Thyroid gland (tissue), 4 donors: ENCODE measurements at regions of chr10 and their contacts with region 1.

Region 1: GRCh38 chr10:509361-510102 is 179.9 kb downstream of the DIP2C start:
- DNase-seq: no peak
- H3K4me3 ChIP-seq: no peak overlapping the region
- H3K27ac ChIP-seq: no peak overlapping the region
- H3K4me1 ChIP-seq: peaks cover 7 to 9% of the 10 kb centered on the region in 2 donors
- H3K27me3 ChIP-seq: no peaks in the 10 kb centered on the region
- CTCF ChIP-seq: no peak
- POLR2A ChIP-seq: no peak

Region 2: DNA sequence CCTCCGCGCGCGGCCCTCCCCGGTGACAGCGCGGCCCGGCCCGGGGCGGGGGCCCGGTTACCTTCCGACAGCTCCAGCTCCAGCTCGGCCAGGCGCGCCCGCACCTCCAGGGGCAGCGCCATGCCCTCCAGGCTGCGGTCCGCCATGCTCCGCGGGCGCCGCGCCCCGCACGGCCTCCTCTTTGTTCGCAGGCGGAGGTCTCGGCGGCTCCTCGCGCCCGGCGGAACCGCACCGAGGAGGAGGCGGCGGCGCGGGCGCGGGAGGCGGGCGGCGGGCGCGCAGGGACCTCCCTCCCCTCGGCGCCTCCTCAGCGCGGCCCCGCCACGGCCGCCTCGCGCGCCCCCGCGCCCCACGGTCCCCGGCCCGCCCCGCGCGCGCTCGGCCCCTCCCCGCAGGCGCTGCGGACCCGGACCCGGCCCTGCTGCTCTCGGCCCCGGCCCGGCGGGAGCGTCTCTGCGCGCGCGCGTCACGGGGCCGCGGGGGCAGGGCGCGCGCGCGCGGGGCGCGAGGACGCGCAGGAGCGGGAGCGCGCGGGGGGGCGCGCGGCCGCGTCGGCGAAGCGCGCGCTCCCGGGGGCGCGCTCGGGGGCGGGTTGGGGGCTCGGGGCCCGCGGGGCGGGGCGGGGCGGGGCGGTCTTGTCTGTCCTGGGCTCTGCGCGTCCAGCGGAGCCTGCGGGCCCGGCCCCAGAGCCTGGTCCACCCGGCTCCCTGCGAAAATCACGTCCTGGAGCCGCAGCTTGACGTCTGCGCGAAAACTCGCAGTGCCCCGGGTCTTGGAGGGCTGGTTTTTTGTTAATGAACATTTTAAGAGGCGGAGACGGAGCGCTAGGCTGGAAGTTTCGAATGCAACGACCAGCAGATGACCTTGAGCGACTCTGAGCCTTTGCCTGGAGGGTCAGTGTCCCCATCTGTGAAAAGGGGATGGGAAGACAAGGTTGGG is 180.2 kb after region 1 on chr10 and contains the start of gene DIP2C:
- intact Hi-C with region 1: loop called (anchors 5 kb)
- DNase-seq: peak; percentile 71 to 72
- H3K4me3 ChIP-seq: peak within 1 kb of the TSS; percentile 35 to 69 (median 59)
- H3K27ac ChIP-seq: peak within 1 kb of the TSS; percentile 20 to 88 (median 77)
- H3K4me1 ChIP-seq: peaks cover 9 to 12% of the 10 kb centered on the region in 2 donors
- H3K27me3 ChIP-seq: no peaks in the 10 kb centered on the region
- CTCF ChIP-seq: no peak
- POLR2A ChIP-seq: peak in 1 of 2 donors; percentile 58
- total RNA-seq, gene DIP2C: 11.4 to 14.6 (median 12.3) TPM

Region 3: GRCh38 chr10:784403-785088 is 275.0 kb after region 1 on chr10:
- intact Hi-C with region 1: loop called (anchors 5 kb)
- DNase-seq: peak; percentile 47 to 51
- H3K4me3 ChIP-seq: peak overlapping the region in 1 of 3 donors; percentile 19
- H3K27ac ChIP-seq: no peak overlapping the region
- H3K4me1 ChIP-seq: peaks cover 13 to 18% of the 10 kb centered on the region in 2 donors
- H3K27me3 ChIP-seq: no peaks in the 10 kb centered on the region
- CTCF ChIP-seq: no peak
- POLR2A ChIP-seq: no peak